Right cardiac atrium (tissue), 5 donors: ENCODE measurements at regions of chr1 and their contacts with region 1.

Region 1: GRCh38 chr1:61287734-61288133 is 205.4 kb downstream of the NFIA start:
- DNase-seq: no peak
- ATAC-seq: peak; percentile 65 to 66
- H3K4me3 ChIP-seq: no peak overlapping the region
- H3K27ac ChIP-seq: no peak overlapping the region
- H3K4me1 ChIP-seq: peaks cover 7% of the 10 kb centered on the region
- H3K27me3 ChIP-seq: no peaks in the 10 kb centered on the region

Region 2: DNA sequence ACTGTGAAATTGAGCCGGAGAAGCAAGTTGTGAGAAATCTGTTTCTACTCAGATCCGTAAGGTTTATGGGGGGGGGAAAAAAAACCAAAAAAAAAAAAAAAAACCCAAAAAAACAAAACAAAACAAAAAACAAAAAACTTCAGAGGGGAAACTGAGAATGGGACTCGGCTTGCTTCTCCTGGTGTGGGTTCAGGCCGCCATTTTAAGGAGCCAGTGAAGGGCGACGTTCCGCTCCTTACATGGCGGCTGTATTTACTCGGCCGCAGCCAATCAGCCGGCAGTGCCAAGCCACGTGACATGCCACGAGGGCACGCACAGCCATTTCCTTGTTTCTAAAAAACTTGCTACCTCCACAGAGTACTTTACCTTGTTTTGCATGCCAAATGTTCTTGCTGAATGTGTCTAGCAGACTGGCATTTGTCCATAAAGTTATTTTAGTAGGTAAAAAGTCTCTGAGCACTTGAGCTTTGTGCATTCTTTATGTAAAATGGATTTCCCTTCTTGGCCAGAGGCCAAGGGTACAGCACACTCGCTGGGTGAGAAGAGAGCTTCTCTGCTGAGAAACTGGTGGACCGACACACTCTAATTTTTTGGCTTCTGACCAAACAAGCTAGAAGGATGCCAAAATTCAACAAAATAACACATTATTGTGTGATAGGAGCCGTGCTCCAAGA is 103.6 kb before region 1 on chr1:
- intact Hi-C with region 1: no loop called
- DNase-seq: peak; percentile 95 to 98 (median 97)
- ATAC-seq: peak; percentile 93 to 96
- H3K4me3 ChIP-seq: peak overlapping the region; percentile 72
- H3K27ac ChIP-seq: peak overlapping the region; percentile 97
- H3K4me1 ChIP-seq: peaks cover 15% of the 10 kb centered on the region
- H3K27me3 ChIP-seq: no peaks in the 10 kb centered on the region

Region 3: DNA sequence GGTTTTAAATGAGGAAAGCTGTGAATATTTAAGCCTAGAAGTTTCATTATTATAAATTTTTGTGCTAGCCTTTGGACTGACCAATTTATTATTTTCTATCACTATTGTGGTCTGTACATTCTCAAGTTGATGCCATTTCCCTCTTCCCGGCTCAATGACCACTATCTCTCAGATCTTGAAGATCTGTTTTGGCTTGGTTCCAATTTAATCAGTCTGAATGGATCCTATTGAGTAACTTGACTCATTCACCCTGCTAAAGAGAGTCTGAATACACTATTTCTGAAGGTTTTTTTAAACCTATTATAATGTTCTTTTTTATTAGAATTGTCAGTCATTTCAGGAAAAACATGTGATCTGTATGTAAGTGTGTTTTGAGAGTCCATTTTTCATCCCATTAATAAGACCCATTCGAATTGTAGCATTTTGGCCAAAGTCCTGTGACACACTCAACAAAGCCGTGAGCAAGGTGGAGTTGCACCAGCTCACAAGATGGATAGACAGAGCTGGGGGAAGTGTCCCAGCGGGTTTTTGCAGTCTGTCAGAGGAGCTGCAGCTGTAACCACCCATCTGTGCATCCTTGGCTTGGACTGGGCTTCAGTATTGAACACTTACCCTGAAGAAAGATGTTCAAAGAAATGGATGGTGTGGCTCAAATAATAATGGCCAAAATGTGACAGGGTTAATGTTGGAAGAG is 59.7 kb before region 1 on chr1:
- intact Hi-C with region 1: no loop called
- DNase-seq: no peak
- ATAC-seq: no peak
- H3K4me3 ChIP-seq: no peak overlapping the region
- H3K27ac ChIP-seq: no peak overlapping the region
- H3K4me1 ChIP-seq: peaks cover 6% of the 10 kb centered on the region
- H3K27me3 ChIP-seq: no peaks in the 10 kb centered on the region

Region 4: DNA sequence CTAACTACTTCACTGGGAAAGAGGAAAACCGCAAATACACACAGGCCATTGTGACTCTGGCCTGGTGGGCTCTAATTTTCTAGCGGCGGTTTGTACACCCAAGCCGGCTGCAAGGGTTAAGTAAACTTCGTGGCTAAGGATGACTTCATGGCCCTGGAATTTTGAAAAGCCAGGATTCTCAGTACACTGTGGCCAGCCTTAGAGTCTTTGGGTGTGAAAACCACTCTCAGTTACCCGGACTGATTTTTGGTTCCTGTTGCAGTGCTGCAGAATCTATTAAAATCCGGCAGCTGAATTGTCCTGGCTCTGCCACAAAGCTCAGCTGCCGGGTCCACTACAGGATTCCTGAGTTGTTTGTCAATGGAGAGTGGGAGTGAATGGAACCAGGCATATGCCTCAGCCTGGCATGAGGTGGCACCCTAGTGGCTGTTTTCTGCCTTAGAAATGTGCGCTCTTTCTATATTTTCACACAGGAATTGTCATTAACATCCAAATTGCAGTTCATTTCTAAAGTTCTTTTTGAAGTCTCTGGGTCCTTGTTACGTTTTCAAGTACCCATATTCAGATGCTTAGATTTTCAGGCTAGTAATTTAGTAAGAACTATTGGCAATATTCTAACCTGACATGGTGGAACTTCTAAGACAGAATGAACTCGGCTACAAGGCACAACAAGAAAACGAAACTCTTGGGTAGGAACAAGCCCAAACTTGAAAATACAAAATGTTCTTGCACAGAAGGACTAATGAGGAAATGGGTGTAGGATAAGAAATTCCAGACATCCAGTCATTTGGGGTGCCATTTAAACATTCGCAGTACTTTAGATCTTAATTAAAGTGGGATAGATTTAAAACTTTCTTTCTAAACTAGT is 50.5 kb after region 1 on chr1:
- intact Hi-C with region 1: loop called in 1 of 4 experiments (anchors 10 kb)
- DNase-seq: peak; percentile 69 to 87 (median 78)
- ATAC-seq: peak; percentile 90 to 91
- H3K4me3 ChIP-seq: peak overlapping the region; percentile 20
- H3K27ac ChIP-seq: peak overlapping the region; percentile 99
- H3K4me1 ChIP-seq: peaks cover 22% of the 10 kb centered on the region
- H3K27me3 ChIP-seq: no peaks in the 10 kb centered on the region